ENCODE measurements at regions of chr5 and their contacts with region 1.

Region 1: GRCh38 chr5:140157032-140157803 is 17.8 kb upstream of the CYSTM1 start:
- DNase-seq: peak; percentile 91
- ATAC-seq: peak; percentile 94 to 97 (median 96)
- H3K4me3 ChIP-seq: peak overlapping the region in 9 of 10 donors; percentile 27 to 58 (median 44)
- H3K27ac ChIP-seq: peak overlapping the region in 9 of 10 donors; percentile 39 to 74 (median 70)
- H3K4me1 ChIP-seq: peaks cover 0 to 22% (median 13%) of the 10 kb centered on the region in 9 donors
- H3K27me3 ChIP-seq: no peaks in the 10 kb centered on the region
- CTCF ChIP-seq: peak; percentile 87 to 93 (median 90)

Region 2: GRCh38 chr5:139872052-139872766 is 285.0 kb before region 1 on chr5:
- intact Hi-C with region 1: loop called in 1 of 10 experiments (anchors 10 kb)
- DNase-seq: no peak
- ATAC-seq: no peak
- H3K4me3 ChIP-seq: no peak overlapping the region
- H3K27ac ChIP-seq: no peak overlapping the region
- H3K4me1 ChIP-seq: peaks cover 0 to 19% (median 0%) of the 10 kb centered on the region in 9 donors
- H3K27me3 ChIP-seq: no peaks in the 10 kb centered on the region
- CTCF ChIP-seq: peak in 1 of 9 donors; percentile 10

Region 3: DNA sequence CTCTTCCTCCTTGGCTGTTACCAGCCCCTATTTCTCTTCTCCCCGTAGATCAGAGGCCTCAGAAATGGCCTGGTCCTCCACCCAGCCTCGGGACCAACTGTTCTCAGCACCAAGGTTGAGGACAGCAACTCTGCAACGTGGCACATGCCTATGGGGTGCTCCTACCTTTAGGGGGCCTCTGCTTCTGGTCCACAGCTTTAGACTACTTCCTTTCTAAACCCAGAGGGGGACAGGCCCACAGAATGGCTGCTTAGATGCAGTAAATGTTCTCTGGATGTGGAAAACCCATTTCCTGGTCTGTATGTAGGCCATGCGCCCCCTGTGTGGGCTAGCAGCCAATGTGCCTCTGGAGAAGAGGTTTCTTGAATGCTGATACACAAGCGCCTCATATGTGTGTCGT is 182.6 kb before region 1 on chr5:
- intact Hi-C with region 1: loop called in 3 of 10 experiments (anchors 5 to 10 kb)
- DNase-seq: peak in 1 of 2 donors; percentile 2
- ATAC-seq: peak in 4 of 8 donors; percentile 18 to 55 (median 47)
- H3K4me3 ChIP-seq: no peak overlapping the region
- H3K27ac ChIP-seq: no peak overlapping the region
- H3K4me1 ChIP-seq: peaks cover 0 to 42% (median 8%) of the 10 kb centered on the region in 9 donors
- H3K27me3 ChIP-seq: no peaks in the 10 kb centered on the region
- CTCF ChIP-seq: no peak

Measured in heart right ventricle (tissue), 16 donors.